Activated CD8-positive, alpha-beta T cell treated with anti-CD3 and anti-CD28 coated beads for 36 hours (primary cell): ENCODE measurements at regions of chr9 and their contacts with region 1.

Region 1: GRCh38 chr9:114930056-114930812 is at the start of gene TNFSF8:
- DNase-seq: peak; percentile 91
- ATAC-seq: peak; percentile 87
- H3K4me3 Mint-ChIP-seq: peak within 1 kb of the TSS; percentile 89
- H3K27ac Mint-ChIP-seq: peak within 1 kb of the TSS; percentile 98
- H3K4me1 Mint-ChIP-seq: peaks cover 47% of the 10 kb centered on the region
- H3K27me3 Mint-ChIP-seq: no peaks in the 10 kb centered on the region
- CTCF ChIP-seq: no peak
- total RNA-seq, gene TNFSF8: 21.7 to 23.9 TPM

Region 2: GRCh38 chr9:114914139-114914538 is 16.1 kb before region 1 on chr9:
- CTCF ChIA-PET with region 1: interaction called, 20 read pairs
- POLR2A ChIA-PET with region 1: interaction called, 39 read pairs
- intact Hi-C with region 1: no loop called
- DNase-seq: no peak
- ATAC-seq: no peak
- H3K4me3 Mint-ChIP-seq: no peak overlapping the region
- H3K27ac Mint-ChIP-seq: peak overlapping the region; percentile 60
- H3K4me1 Mint-ChIP-seq: peaks cover 73% of the 10 kb centered on the region
- H3K27me3 Mint-ChIP-seq: no peaks in the 10 kb centered on the region
- CTCF ChIP-seq: no peak

Region 3: GRCh38 chr9:114919611-114920010 is 10.6 kb before region 1 on chr9:
- CTCF ChIA-PET with region 1: interaction called, 16 read pairs
- POLR2A ChIA-PET with region 1: interaction called, 39 read pairs
- intact Hi-C with region 1: no loop called
- DNase-seq: peak; percentile 43
- ATAC-seq: peak; percentile 77
- H3K4me3 Mint-ChIP-seq: peak overlapping the region; percentile 11
- H3K27ac Mint-ChIP-seq: peak overlapping the region; percentile 83
- H3K4me1 Mint-ChIP-seq: peaks cover 85% of the 10 kb centered on the region
- H3K27me3 Mint-ChIP-seq: no peaks in the 10 kb centered on the region
- CTCF ChIP-seq: no peak

Region 4: DNA sequence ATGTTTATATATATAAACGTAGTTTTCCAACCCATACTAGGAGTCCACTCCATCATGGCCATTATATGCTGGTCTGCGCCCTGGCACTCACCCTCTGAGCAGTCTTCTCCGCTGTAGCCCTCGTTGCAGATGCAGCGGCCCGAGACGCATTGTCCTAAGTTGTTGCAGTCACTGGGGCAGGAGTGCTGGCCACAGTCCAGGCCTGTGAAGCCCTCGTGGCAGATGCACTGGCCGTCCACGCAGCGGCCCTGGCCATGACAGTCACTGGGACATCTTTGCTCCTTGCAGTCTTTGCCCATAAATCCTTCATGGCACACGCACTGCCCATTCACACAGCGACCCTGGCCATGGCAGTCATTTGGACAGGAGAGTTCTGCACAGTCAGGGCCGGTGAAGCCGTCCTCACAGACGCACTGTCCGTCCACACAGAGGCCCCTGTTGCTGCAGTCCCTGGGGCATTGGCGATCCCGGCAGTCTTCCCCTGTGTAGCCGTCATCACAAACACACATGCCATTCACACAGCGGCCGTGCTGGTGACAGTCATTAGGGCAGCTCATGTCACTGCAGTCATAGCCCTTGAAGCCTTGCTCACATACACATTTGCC is 155.6 kb after region 1 on chr9:
- CTCF ChIA-PET with region 1: no interaction called
- POLR2A ChIA-PET with region 1: no interaction called
- intact Hi-C with region 1: no loop called
- DNase-seq: no peak
- ATAC-seq: no peak
- H3K4me3 Mint-ChIP-seq: no peak overlapping the region
- H3K27ac Mint-ChIP-seq: no peak overlapping the region
- H3K4me1 Mint-ChIP-seq: no peaks in the 10 kb centered on the region
- H3K27me3 Mint-ChIP-seq: peaks cover 6% of the 10 kb centered on the region
- CTCF ChIP-seq: no peak